IMR-90 (cell line): ENCODE measurements at regions of chr9 and their contacts with region 1.

Region 1: DNA sequence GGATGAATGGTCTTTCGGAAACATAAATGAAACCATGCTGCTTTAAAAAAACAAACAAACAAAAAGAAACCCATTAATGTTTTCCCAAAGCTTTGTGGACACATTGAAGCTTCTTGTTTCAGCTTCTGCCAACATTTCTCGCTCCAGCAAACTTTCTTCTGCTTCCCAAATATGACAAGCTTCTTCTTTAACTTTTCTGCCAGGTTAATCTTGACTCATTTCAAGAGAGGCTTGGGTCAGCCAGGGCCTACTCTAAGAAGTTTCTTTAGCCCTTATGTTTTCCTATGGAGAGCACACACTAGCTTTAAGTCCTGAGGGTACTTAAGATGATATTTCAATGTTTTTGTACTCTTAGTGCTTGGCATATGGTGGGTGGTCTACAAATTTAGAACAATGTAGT is 6.1 kb downstream of the ANXA1 start:
- DNase-seq: no peak
- ATAC-seq: no peak
- H3K4me3 ChIP-seq: no peak overlapping the region
- H3K27ac ChIP-seq: no peak overlapping the region; the same call in 1 of the 2 replicates
- H3K4me1 ChIP-seq: peaks cover 4% of the 10 kb centered on the region
- H3K27me3 ChIP-seq: no peaks in the 10 kb centered on the region
- CTCF ChIP-seq: no peak
- POLR2A ChIP-seq: peak; percentile 7; the same call in 1 of the 2 replicates
- RAD21 ChIP-seq: no peak

Region 2: GRCh38 chr9:73073337-73074175 is 84.3 kb before region 1 on chr9:
- CTCF ChIA-PET with region 1: no interaction called
- POLR2A ChIA-PET with region 1: interaction called, 16 read pairs
- dilution Hi-C with region 1: no loop called
- in situ Hi-C with region 1: no loop called
- intact Hi-C with region 1: no loop called
- DNase-seq: no peak
- ATAC-seq: peak; percentile 40; the same call in 1 of the 2 replicates
- H3K4me3 ChIP-seq: no peak overlapping the region
- H3K27ac ChIP-seq: no peak overlapping the region
- H3K4me1 ChIP-seq: no peaks in the 10 kb centered on the region
- H3K27me3 ChIP-seq: no peaks in the 10 kb centered on the region
- CTCF ChIP-seq: no peak
- POLR2A ChIP-seq: no peak
- RAD21 ChIP-seq: no peak